MCF 10A (cell line): ENCODE measurements at regions of chr1 and their contacts with region 1.

Region 1: GRCh38 chr1:50978144-50978851 is 8.3 kb downstream of the CDKN2C start:
- DNase-seq: peak; percentile 73
- H3K4me3 Mint-ChIP-seq: peak overlapping the region; percentile 75
- H3K27ac Mint-ChIP-seq: peak overlapping the region; percentile 71
- H3K4me1 Mint-ChIP-seq: peaks cover 12% of the 10 kb centered on the region
- H3K27me3 Mint-ChIP-seq: no peaks in the 10 kb centered on the region
- CTCF ChIP-seq: no peak

Region 2: GRCh38 chr1:50959913-50960844 is 18.1 kb before region 1 on chr1 and contains the start of gene FAF1:
- CTCF ChIA-PET with region 1: interaction called, 13 read pairs
- POLR2A ChIA-PET with region 1: interaction called, 50 read pairs
- intact Hi-C with region 1: no loop called
- DNase-seq: peak; percentile 96
- H3K4me3 Mint-ChIP-seq: peak within 1 kb of the TSS; percentile 76
- H3K27ac Mint-ChIP-seq: peak within 1 kb of the TSS; percentile 1
- H3K4me1 Mint-ChIP-seq: peaks cover 11% of the 10 kb centered on the region
- H3K27me3 Mint-ChIP-seq: no peaks in the 10 kb centered on the region
- CTCF ChIP-seq: no peak
- total RNA-seq, gene FAF1: 74.4 and 93.2 TPM in 2 replicates

Region 3: DNA sequence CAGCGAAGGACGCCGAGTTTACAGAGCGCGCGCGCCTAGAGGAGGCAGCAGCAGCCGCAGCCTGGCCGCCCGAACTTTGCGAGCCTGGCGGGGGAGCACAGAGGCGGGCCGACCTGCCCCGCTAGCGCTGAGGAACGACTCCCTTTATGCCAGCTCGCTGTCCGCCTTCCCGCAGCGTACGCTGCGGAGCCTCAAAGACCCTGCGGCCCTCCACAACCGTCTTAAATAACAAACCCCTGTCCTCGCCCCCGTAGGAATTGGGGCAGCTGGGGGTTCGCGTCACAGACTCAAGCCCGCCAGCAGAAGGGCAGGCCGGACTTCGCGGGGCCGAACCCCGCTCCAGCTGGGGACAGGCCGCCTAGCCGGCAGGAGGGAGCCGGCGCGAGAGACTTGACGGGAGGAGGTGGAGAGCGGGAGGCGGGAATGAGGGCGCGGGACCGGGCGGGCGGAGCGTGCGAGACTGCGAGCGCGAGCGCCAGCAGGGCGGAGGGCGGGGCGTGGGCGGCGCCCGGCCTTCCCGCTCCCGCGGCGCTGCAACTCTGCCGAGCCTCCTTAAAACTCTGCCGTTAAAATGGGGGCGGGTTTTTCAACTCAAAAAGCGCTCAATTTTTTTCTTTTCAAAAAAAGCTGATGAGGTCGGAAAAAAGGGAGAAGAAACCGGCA is 10.0 kb before region 1 on chr1:
- CTCF ChIA-PET with region 1: interaction called, 14 read pairs
- POLR2A ChIA-PET with region 1: interaction called, 115 read pairs
- intact Hi-C with region 1: no loop called
- DNase-seq: peak; percentile 91
- H3K4me3 Mint-ChIP-seq: peak overlapping the region; percentile 86
- H3K27ac Mint-ChIP-seq: peak overlapping the region; percentile 95
- H3K4me1 Mint-ChIP-seq: peaks cover 8% of the 10 kb centered on the region
- H3K27me3 Mint-ChIP-seq: no peaks in the 10 kb centered on the region
- CTCF ChIP-seq: peak; percentile 42